AG04449 (cell line): ENCODE measurements at regions of chr3 and their contacts with region 1.

Region 1: GRCh38 chr3:176939022-176939817 is 258.1 kb downstream of the TBL1XR1 start:
- DNase-seq: no peak
- H3K4me3 ChIP-seq: no peak overlapping the region
- CTCF ChIP-seq: peak; percentile 76

Region 2: DNA sequence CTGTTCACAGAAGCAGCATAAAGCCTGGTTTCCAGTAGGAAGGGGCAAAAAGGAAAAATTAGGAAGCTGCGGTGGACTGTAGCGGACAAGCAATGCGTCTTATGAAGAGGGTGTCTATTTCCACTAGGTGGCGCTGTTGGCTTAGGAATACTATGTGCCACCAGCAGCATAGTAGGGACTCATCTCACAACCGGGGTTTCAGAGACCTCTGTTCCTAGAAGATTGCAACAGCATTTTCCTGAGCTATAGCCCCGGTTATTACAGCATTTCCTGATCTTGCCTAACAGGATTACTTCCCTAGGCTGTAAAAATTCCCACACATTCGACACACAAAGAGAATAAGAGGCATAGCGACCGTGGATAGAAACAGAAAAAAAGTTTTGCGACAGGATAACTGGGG is 424.9 kb before region 1 on chr3:
- CTCF ChIA-PET with region 1: interaction called, 15 read pairs
- POLR2A ChIA-PET with region 1: no interaction called
- DNase-seq: no peak
- H3K4me3 ChIP-seq: no peak overlapping the region
- CTCF ChIP-seq: peak; percentile 23

Region 3: GRCh38 chr3:176663837-176664831 is 275.1 kb before region 1 on chr3:
- CTCF ChIA-PET with region 1: interaction called, 10 read pairs
- POLR2A ChIA-PET with region 1: no interaction called
- DNase-seq: peak; percentile 28
- H3K4me3 ChIP-seq: no peak overlapping the region
- CTCF ChIP-seq: peak; percentile 14

Region 4: DNA sequence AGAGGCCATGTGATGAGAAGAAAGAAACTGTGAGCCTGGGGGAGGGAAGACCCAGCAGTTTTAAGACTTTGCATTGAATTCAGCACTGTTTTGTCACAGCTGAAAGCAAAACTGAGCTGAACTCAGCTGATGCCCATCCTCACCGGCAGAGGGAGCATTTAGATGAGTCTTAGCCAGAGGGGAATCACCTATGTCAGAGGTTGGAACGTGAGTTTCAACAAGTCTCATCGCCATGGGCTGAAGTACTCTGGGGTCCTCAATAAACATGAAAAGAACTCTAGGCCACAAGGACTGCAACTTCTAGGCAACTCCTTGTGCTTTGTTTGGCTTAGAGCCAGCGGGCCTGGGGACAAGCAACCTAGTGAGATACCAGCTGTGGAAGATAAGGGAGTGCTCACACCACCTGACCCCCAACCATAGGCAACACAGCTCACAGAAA is 66.4 kb before region 1 on chr3:
- CTCF ChIA-PET with region 1: interaction called, 70 read pairs
- POLR2A ChIA-PET with region 1: no interaction called
- DNase-seq: no peak
- H3K4me3 ChIP-seq: no peak overlapping the region
- CTCF ChIP-seq: peak; percentile 83

Region 5: GRCh38 chr3:176928582-176928931 is 10.7 kb before region 1 on chr3:
- CTCF ChIA-PET with region 1: interaction called, 13 read pairs
- POLR2A ChIA-PET with region 1: no interaction called
- DNase-seq: no peak
- H3K4me3 ChIP-seq: no peak overlapping the region
- CTCF ChIP-seq: no peak

Region 6: DNA sequence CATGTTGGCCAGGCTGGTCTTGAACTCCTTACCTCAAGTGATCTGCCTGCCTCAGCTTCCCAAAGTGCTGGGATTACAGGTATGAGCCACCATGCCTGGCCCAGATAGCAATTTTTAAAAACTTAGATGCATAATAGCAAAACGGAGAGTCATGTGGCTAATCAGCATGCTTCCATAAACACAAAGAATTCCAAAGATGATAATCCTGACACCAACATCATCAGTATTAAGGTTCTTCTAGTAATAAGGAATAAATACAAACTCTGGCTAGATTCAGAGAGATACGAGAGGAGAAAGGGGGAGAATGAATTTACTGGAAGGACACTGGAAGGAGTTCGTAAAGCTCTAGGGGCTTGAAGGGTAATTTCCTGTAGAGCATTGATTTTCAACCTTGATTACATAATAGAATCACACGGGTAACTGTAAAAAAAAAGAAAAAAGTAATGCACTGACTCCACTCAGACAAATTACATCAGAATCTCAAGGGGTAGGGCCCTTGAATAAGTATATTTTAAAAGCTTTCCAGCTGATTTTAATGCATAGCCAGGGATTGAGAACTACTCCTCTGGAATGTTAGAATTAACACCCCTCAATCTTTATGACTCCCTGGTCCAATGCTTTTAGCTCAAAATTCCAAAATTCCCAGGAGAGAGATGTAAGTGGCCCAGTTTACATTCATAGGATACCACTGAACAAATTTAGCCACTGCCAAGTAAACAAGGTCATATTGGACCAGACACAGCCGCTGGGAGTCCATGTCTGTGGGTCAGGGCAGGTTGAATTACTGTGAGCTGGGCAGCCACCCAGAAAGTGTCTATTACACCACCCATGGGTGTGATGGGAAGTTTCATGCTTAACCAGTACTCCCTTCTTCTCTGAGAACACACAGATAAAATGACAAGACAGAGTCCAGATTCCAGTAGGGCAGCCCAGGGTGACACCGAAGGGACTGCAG is 14.2 kb after region 1 on chr3:
- CTCF ChIA-PET with region 1: interaction called, 11 read pairs
- POLR2A ChIA-PET with region 1: interaction called, 3 read pairs
- DNase-seq: peak; percentile 95
- H3K4me3 ChIP-seq: no peak overlapping the region
- CTCF ChIP-seq: no peak